ENCODE measurements at regions of chr5 and their contacts with region 1.

Region 1: GRCh38 chr5:124748687-124749594 is 2.5 kb upstream of the ZNF608 start:
- DNase-seq: peak in 2 of 3 donors; percentile 53 to 59
- H3K4me3 ChIP-seq: peak overlapping the region; percentile 36 to 78 (median 53)
- H3K4me3 Mint-ChIP-seq: peak overlapping the region; percentile 82 to 96
- H3K27ac ChIP-seq: no peak overlapping the region
- H3K27ac Mint-ChIP-seq: peak overlapping the region in 2 of 7 donors; percentile 49 to 67
- H3K4me1 ChIP-seq: peaks cover 41 to 43% of the 10 kb centered on the region in 2 donors
- H3K4me1 Mint-ChIP-seq: peaks cover 43% of the 10 kb centered on the region
- H3K27me3 ChIP-seq: peaks cover 20 to 21% of the 10 kb centered on the region in 2 donors
- H3K27me3 Mint-ChIP-seq: peaks cover 7 to 20% (median 10%) of the 10 kb centered on the region in 3 donors
- CTCF ChIP-seq: no peak

Region 2: GRCh38 chr5:124649491-124650146 is 99.3 kb before region 1 on chr5:
- intact Hi-C with region 1: loop called in 1 of 2 experiments (anchors 10 kb)
- DNase-seq: peak; percentile 93 to 96 (median 94)
- H3K4me3 ChIP-seq: peak overlapping the region in 2 of 3 experiments; percentile 2 to 61
- H3K4me3 Mint-ChIP-seq: peak overlapping the region; percentile 17 to 86
- H3K27ac ChIP-seq: no peak overlapping the region
- H3K27ac Mint-ChIP-seq: peak overlapping the region in 6 of 7 donors; percentile 46 to 84 (median 78)
- H3K4me1 ChIP-seq: peaks cover 40 to 42% of the 10 kb centered on the region in 2 donors
- H3K4me1 Mint-ChIP-seq: peaks cover 41% of the 10 kb centered on the region
- H3K27me3 ChIP-seq: peaks cover 77 to 87% of the 10 kb centered on the region in 2 donors
- H3K27me3 Mint-ChIP-seq: peaks cover 47 to 77% (median 54%) of the 10 kb centered on the region in 3 donors
- CTCF ChIP-seq: no peak

Measured in CD14-positive monocyte (primary cell).